Transverse colon (tissue), 4 donors: ENCODE measurements at regions of chr14 and their contacts with region 1.

Region 1: DNA sequence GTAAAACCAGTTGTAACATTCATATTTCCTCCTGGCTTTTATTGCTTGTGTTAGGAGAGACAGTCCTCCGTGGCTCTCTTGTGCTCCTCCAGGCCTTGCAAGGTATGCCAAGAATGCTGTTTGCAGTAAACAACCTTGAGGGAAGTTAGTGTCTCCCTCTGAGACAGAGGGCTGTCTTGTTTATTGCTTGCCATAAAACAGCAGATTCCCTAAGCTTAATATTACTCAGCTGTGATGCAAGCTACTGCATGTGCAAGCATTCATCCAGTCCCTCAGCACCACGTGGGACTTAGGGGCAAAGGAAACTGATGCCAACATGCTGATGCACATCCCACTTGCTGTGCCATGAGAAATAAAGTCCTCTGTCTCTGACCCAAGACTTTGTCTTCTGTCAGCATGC is 6.6 kb downstream of the POMT2 start:
- DNase-seq: peak; percentile 34
- H3K4me3 ChIP-seq: no peak overlapping the region
- H3K27ac ChIP-seq: peak overlapping the region; percentile 59 to 76 (median 70)
- H3K4me1 ChIP-seq: peaks cover 6 to 42% (median 22%) of the 10 kb centered on the region in 4 donors
- H3K27me3 ChIP-seq: no peaks in the 10 kb centered on the region
- CTCF ChIP-seq: no peak
- EP300 ChIP-seq: no peak
- POLR2A ChIP-seq: no peak

Region 2: DNA sequence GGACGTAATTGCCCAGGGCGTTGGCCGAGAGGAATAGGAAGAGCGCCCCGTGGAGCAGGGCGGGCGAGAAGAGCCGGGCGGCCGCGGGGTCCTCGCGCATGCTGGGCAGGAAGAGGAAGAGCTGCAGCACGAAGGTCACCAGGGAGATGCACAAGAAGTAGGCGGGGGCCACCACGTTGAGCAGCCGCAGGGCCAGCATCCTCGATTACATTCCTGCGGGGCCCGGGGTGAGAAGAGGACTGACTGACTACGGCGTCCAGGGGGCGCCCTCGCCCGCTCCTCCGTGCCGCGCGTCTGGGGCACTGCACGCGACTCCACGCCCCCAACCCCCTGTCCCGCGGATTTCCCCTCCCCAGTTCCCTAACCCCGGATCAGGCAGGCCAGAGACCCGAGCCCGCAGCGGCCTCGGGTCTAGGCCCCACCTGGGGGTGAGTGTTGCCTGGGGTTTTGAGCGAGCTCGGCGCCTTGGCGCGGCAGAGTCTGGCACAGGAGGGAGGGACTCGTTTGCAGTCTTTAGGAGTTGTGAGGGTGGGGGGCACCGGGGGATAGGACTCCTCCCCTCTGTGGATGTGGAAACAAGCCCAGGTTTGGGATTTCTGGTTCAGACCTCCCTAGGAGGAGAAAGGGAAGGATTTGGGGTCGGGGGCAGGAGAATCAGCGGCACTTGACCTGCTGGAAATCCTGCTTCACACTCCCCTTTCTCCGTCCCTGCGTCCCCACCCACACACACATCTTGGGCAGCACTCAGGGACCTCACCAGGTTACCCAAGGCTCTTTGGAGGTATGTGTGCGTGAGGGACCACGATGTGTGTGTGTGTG is 174.3 kb before region 1 on chr14:
- in situ Hi-C with region 1: loop called in 2 of 4 experiments (anchors 10 to 25 kb)
- intact Hi-C with region 1: no loop called
- DNase-seq: peak; percentile 22
- H3K4me3 ChIP-seq: peak overlapping the region in 1 of 4 donors; percentile 14
- H3K27ac ChIP-seq: no peak overlapping the region
- H3K4me1 ChIP-seq: peaks cover 0 to 26% (median 20%) of the 10 kb centered on the region in 4 donors
- H3K27me3 ChIP-seq: peaks cover 98% of the 10 kb centered on the region
- CTCF ChIP-seq: peak; percentile 27 to 49 (median 35)
- EP300 ChIP-seq: no peak
- POLR2A ChIP-seq: no peak

Region 3: GRCh38 chr14:77151918-77152588 is 162.0 kb before region 1 on chr14:
- in situ Hi-C with region 1: loop called in 2 of 4 experiments (anchors 10 to 25 kb)
- intact Hi-C with region 1: loop called (anchors 5 kb)
- DNase-seq: no peak
- H3K4me3 ChIP-seq: no peak overlapping the region
- H3K27ac ChIP-seq: no peak overlapping the region
- H3K4me1 ChIP-seq: no peaks in the 10 kb centered on the region
- H3K27me3 ChIP-seq: peaks cover 43% of the 10 kb centered on the region
- CTCF ChIP-seq: peak in 4 of 5 experiments; percentile 22 to 28 (median 25)
- EP300 ChIP-seq: no peak
- POLR2A ChIP-seq: no peak

Region 4: DNA sequence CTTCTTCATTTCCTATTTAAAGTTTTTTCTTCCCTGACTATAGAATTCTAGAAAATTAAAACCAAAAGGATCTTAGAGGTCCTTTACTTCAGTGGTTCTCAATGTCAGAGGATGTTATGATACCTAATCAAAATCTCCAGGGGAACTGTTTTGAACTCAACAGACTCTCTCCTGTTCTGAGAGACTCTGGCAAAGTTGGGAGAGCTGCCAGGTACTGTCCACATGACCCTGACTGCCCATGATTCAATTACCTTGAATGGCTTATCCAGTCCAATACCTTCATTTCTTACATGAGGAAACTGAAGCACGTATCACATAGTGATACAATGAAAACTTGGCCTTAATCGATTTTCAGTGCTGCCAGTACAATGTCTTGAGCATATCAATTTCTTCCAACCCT is 377.2 kb after region 1 on chr14:
- in situ Hi-C with region 1: no loop called
- intact Hi-C with region 1: no loop called
- DNase-seq: no peak
- H3K4me3 ChIP-seq: no peak overlapping the region
- H3K27ac ChIP-seq: no peak overlapping the region
- H3K4me1 ChIP-seq: no peaks in the 10 kb centered on the region
- H3K27me3 ChIP-seq: no peaks in the 10 kb centered on the region
- CTCF ChIP-seq: no peak
- EP300 ChIP-seq: no peak
- POLR2A ChIP-seq: no peak